ENCODE measurements at regions of chr16 and their contacts with region 1.

Region 1: DNA sequence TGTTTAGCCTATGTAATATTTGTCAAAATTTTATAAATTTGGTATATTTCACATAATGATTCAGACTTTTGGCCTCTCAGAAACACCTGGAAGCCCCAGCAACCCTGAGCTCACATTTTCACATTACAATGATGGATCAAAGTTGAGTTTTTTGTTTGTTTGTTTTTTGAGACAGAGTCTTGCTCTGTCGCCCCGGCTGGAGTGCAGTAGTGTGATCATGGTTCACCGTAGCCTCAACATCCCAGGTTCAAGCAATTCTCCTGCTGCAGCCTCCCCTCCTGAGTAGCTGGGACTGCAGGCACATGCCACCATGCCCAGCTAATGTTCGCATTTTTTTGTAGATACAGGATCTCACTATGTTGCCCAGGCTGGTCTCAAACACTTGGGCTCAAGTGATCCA is 10.6 kb upstream of the VAT1L start:
- DNase-seq: no peak
- H3K4me3 ChIP-seq: no peak overlapping the region
- H3K27ac ChIP-seq: no peak overlapping the region
- H3K4me1 ChIP-seq: peaks cover 3% of the 10 kb centered on the region
- H3K27me3 ChIP-seq: no peaks in the 10 kb centered on the region
- CTCF ChIP-seq: no peak
- POLR2A ChIP-seq: no peak

Region 2: DNA sequence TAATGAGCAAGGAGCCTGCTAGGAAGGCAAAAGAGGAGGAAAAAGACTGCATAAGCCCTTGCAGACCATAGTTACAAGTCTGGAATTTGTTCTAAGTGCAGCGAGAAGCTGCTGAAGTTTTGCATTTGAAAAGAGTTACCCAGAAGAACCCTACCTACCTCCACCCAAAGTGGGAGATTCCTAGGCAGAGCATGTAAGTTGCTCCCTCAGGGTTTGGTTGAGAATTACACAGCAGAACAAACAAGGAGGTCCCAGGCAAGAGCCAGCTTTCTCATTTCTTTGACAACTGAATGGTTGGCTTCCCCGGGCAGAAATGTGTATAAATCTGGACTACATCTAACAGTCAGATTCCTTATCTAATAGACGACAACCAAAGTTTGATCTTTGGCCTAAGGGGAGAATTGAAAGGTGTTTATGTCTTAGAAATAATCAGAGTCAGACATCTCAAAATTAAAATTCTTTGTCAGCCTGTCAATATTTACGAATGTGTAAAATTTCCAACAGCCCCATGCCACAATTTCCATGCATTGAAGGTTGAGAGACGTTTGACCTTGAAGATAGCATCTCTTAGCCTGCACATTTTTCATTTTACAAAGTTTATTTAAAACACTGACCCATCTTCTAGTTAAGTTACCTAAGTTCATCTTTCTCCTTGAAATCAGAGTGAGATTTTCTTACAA is 173.9 kb before region 1 on chr16:
- CTCF ChIA-PET with region 1: no interaction called
- POLR2A ChIA-PET with region 1: no interaction called
- dilution Hi-C with region 1: no loop called
- intact Hi-C with region 1: no loop called
- DNase-seq: no peak
- H3K4me3 ChIP-seq: no peak overlapping the region
- H3K27ac ChIP-seq: no peak overlapping the region
- H3K4me1 ChIP-seq: no peaks in the 10 kb centered on the region
- H3K27me3 ChIP-seq: no peaks in the 10 kb centered on the region
- CTCF ChIP-seq: no peak
- POLR2A ChIP-seq: no peak

Region 3: GRCh38 chr16:77758046-77758445 is 19.7 kb before region 1 on chr16:
- CTCF ChIA-PET with region 1: no interaction called
- POLR2A ChIA-PET with region 1: no interaction called
- dilution Hi-C with region 1: no loop called
- intact Hi-C with region 1: loop called (anchors 1 kb)
- DNase-seq: no peak
- H3K4me3 ChIP-seq: no peak overlapping the region
- H3K27ac ChIP-seq: no peak overlapping the region
- H3K4me1 ChIP-seq: peaks cover 2% of the 10 kb centered on the region
- H3K27me3 ChIP-seq: no peaks in the 10 kb centered on the region
- CTCF ChIP-seq: no peak
- POLR2A ChIP-seq: no peak

Measured in endothelial cell of umbilical vein (primary cell).